ENCODE measurements at regions of chr2 and their contacts with region 1.

Region 1: DNA sequence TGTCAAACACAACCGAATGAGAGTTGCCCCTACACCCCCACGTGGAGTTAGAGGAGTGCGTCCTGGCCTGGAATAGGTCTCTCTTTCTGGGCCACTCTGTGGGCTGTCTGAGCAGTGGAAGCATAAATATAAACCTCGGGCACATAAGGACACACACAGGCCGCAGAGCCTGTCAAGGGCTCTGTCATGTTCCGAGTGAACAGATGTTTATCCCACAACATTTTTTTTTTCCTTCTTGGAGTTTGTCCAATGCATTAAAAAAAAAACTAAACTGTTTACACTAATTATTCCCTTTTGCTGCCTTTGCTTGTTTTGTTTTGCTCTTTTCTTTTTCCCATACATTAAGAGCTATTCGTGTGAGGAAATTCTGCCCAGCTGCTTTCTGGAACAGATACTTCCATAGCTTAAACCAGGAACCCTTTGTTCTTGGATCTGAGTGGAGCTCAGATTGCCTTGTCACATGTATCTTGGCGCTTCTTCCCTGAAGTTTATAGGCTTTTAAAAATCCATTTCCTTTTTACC is 228.3 kb upstream of the FOSL2 start:
- DNase-seq: peak; percentile 68 to 88
- ATAC-seq: peak; percentile 81 to 86
- H3K4me3 ChIP-seq: peak overlapping the region in 3 of 4 donors; percentile 17 to 25 (median 24)
- H3K27ac ChIP-seq: peak overlapping the region; percentile 89 to 96 (median 92)
- H3K4me1 ChIP-seq: peaks cover 36 to 61% of the 10 kb centered on the region in 2 donors
- H3K27me3 ChIP-seq: no peaks in the 10 kb centered on the region
- CTCF ChIP-seq: no peak
- POLR2A ChIP-seq: peak in 1 of 2 donors; percentile 50

Region 2: DNA sequence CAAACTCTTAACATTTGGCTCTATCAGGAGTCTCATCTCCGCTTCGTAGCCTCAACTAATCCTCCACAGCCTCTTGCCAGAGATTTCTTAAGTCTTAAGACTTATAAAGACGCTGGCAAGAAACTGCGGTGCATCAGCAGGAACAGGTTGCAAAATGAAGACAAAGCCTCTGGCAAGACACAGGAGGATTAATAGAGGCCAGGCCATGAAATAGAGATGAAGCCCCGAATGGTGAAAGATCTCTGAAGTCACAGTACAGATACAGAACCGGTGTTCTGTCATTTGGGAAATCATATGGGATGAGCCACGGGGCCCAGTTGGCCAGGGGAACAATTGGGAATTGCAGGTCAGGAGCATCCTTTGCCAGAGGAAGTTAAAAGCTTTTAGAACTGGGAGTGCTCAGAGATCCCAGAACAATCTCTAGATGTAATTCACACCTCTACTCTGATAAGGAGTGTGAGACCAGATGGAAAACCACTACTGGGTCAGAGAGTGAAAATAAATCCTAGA is 37.4 kb after region 1 on chr2:
- in situ Hi-C with region 1: loop called in 1 of 4 experiments (anchors 5 kb)
- intact Hi-C with region 1: loop called (anchors 1 kb)
- DNase-seq: peak; percentile 85 to 93
- ATAC-seq: peak; percentile 92 to 94
- H3K4me3 ChIP-seq: no peak overlapping the region
- H3K27ac ChIP-seq: peak overlapping the region; percentile 75 to 87 (median 82)
- H3K4me1 ChIP-seq: peaks cover 25 to 38% of the 10 kb centered on the region in 2 donors
- H3K27me3 ChIP-seq: no peaks in the 10 kb centered on the region
- CTCF ChIP-seq: no peak
- POLR2A ChIP-seq: peak; percentile 47 to 64